GM13977 (cell line): ENCODE measurements at regions of chr4 and their contacts with region 1.

Region 1: DNA sequence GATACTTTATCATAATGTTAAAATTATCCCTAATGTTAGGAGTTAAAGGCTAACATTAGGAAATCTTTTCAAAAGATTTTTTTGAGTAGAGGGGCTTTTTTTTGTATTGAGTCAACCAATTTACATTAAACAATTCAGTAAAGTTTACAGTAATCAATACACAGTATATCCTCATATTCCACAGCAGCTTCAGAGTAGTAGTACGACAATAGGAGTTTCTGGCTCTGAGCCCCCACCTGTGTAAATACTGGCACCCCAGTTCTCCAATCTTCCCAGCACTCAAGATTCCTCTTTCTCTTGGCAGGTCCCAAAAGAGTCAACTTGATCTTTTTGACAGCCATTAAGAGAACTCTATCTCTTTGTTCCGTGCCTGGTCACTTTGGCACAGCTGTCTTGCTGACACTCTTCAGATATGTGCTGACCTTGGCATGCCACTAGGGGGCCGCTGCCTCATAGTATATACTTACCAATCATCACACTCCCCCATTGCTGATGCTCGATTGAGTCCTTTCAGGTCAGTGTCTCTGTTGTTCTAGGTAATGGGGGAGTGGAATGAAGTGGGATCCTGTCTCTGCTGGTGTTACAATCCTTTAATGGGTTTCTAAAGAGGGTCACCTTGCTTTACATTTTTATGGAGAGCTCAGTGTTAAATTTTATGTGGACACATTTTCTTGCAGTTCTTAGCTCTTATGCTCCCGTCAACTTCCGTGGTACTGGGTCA is 19.5 kb upstream of the CCNI start:
- DNase-seq: peak; percentile 65
- CTCF ChIP-seq: peak; percentile 90

Region 2: DNA sequence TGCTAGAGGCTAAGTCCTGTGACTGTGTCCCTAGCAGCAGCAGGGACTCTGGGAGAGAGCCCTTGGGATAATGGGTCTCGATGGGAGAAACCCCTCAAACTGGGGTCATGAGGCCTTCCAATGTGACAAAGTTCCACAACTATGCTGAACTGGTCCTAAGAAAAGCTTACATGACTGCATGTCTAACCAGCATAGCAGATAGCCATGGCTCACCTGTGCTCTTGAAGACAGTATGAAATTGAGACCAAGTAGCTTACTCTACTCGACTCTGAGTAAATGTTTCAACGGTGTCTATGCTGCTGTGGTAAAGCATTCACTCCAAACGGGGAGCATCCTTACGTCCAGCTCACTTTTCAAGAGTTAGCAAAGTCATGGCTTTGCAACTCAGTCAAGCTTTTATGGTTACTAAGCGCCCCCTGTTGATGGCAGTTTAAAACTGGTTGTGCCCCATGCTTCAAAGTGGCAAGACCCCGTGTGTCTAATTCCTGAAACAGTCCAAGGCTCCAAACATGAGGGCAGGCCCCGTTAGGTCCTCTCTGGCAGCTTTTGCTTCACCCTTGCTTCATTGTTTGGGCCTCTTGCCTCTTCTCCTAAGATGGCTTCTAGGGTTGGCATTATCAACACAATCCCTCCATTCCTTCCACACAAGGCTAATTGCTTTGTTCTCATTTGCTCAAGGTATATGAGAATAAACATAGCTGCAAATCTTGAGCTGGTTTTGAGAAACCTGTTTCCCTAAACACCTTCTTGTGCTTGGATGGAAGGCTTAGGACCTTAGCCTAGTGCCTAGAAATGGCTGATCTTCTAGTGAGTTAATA is 108.3 kb after region 1 on chr4:
- in situ Hi-C with region 1: loop called (anchors 10 kb)
- DNase-seq: peak; percentile 56
- CTCF ChIP-seq: peak; percentile 84

Region 3: DNA sequence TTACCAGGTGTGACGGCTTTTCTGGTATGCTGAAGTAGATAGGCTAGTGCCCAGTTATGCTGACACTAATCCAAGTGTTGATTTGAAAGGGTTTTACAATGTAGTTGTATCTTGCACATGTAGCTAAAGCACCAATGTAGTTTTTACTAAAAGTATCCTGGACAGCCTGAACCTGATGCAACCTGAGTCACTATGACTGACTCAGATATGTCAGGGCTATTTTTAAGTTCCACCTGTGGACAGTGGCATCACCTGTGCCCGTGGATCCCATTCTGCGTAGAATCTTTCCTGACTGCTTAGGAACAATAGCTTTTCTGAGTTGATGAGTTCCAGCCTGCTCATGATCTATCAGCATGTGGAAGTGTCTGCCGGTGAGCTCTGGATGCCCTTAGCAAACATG is 119.8 kb after region 1 on chr4:
- in situ Hi-C with region 1: no loop called
- DNase-seq: no peak
- CTCF ChIP-seq: no peak